ENCODE measurements at regions of chr9 and their contacts with region 1.

Region 1: GRCh38 chr9:88593537-88594185 is 58.7 kb downstream of the NXNL2 start:
- DNase-seq: peak in 1 of 2 donors; percentile 79
- ATAC-seq: peak in 7 of 8 donors; percentile 66 to 82 (median 75)
- H3K4me3 ChIP-seq: no peak overlapping the region
- H3K27ac ChIP-seq: no peak overlapping the region
- H3K4me1 ChIP-seq: no peaks in the 10 kb centered on the region
- H3K27me3 ChIP-seq: peaks cover 0 to 16% (median 0%) of the 10 kb centered on the region in 7 donors
- CTCF ChIP-seq: peak; percentile 45 to 84 (median 70)

Region 2: DNA sequence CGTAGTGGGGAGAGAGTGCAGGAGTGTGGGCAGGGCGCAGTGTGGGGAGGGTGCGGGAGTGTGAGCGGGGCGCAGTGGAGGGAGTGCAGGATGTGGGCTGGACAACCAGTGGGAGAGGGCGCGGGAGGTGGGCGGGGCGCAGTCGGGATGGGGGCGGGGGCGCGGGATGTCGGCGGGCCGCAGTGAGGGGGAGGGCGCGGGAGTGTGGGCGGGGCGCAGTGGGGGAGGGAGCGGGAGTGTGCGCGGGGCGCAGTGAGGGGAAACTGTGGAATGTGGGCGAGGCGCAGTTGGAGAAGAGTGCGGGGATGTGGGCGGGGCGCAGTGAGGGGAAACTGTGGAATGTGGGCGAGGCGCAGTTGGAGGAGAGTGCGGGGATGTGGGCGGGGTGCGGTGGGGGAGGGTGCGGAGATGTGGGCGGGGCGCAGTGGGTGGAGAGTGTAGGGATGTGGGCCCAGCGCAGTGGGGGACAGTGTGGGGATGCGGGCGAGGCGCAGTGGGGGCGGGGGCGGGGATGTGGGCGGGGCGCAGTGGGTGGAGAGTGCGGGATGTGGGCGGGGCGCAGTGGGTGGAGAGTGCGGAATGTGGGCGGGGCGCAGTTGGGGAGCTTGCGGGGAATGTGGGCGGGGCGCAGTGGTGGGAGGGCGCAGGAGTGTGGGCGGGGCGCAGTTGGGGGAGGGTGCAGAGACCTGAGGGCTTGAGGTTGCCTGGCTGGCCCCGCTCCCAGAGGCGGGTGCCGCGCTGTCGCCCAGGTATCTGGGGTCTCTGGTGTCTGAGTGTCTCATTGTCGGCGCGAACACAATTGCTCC is 59.0 kb before region 1 on chr9 and contains the start of gene NXNL2:
- intact Hi-C with region 1: no loop called
- DNase-seq: peak; percentile 59 to 79
- ATAC-seq: peak; percentile 44 to 81 (median 70)
- H3K4me3 ChIP-seq: peak within 1 kb of the TSS; percentile 19 to 50 (median 40)
- H3K27ac ChIP-seq: peak within 1 kb of the TSS in 5 of 10 donors; percentile 22 to 67 (median 48)
- H3K4me1 ChIP-seq: peaks cover 6 to 37% (median 14%) of the 10 kb centered on the region in 9 donors
- H3K27me3 ChIP-seq: peaks cover 5 to 61% (median 36%) of the 10 kb centered on the region in 7 donors
- CTCF ChIP-seq: no peak
- total RNA-seq, gene NXNL2: not detected

Region 3: DNA sequence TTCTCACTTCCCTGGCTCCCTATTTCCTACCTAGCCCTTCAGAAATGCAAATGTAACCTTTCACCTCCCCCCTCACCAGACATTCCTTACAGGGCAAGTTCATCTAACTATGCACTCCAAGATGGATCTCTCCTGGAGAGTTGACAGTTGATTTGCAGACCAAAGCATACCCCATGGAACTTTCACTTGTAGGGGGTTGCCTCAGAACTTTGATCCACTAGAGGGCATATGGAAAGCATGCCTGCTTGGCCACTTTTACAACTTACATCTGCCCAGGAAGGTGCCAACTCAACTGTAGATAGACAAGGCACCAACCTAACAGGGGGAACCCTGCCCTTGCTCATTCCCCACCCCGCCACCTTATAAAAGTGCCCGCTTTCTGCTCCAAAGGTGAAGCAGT is 129.1 kb after region 1 on chr9:
- intact Hi-C with region 1: loop called in 1 of 10 experiments (anchors 10 kb)
- DNase-seq: no peak
- ATAC-seq: peak in 6 of 8 donors; percentile 37 to 75 (median 63)
- H3K4me3 ChIP-seq: no peak overlapping the region
- H3K27ac ChIP-seq: no peak overlapping the region
- H3K4me1 ChIP-seq: peaks cover 0 to 10% (median 6%) of the 10 kb centered on the region in 9 donors
- H3K27me3 ChIP-seq: peaks cover 0 to 7% (median 0%) of the 10 kb centered on the region in 7 donors
- CTCF ChIP-seq: peak in 8 of 9 donors; percentile 14 to 54 (median 46)

Region 4: GRCh38 chr9:88781628-88782391 is 188.1 kb after region 1 on chr9:
- intact Hi-C with region 1: loop called in 1 of 10 experiments (anchors 10 kb)
- DNase-seq: peak; percentile 33 to 48
- ATAC-seq: peak; percentile 40 to 82 (median 72)
- H3K4me3 ChIP-seq: no peak overlapping the region
- H3K27ac ChIP-seq: peak overlapping the region; percentile 15 to 71 (median 54)
- H3K4me1 ChIP-seq: peaks cover 9 to 50% (median 43%) of the 10 kb centered on the region in 9 donors
- H3K27me3 ChIP-seq: no peaks in the 10 kb centered on the region
- CTCF ChIP-seq: peak; percentile 14 to 70 (median 50)

Region 5: DNA sequence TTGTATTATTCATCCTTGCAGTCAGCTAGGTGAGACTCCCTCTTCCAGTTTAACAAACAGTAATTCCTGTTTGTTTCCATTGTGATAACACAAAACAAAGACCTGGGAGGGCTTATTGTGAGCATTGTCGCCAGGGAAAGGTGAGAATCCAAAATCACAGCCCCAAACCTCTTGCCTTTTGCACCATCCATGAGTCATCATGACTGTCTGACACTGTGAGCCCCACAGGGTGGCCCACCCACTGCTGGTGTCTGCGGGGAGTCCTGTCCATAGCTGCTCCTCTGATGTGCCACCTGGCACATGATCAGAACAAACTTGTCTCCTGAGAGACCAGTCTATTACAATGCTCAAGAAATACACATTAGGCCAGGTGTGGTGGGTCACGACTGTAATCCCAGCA is 363.9 kb after region 1 on chr9:
- intact Hi-C with region 1: no loop called
- DNase-seq: no peak
- ATAC-seq: no peak
- H3K4me3 ChIP-seq: no peak overlapping the region
- H3K27ac ChIP-seq: no peak overlapping the region
- H3K4me1 ChIP-seq: peaks cover 0 to 13% (median 5%) of the 10 kb centered on the region in 9 donors
- H3K27me3 ChIP-seq: peaks cover 0 to 15% (median 0%) of the 10 kb centered on the region in 7 donors
- CTCF ChIP-seq: no peak

Region 6: DNA sequence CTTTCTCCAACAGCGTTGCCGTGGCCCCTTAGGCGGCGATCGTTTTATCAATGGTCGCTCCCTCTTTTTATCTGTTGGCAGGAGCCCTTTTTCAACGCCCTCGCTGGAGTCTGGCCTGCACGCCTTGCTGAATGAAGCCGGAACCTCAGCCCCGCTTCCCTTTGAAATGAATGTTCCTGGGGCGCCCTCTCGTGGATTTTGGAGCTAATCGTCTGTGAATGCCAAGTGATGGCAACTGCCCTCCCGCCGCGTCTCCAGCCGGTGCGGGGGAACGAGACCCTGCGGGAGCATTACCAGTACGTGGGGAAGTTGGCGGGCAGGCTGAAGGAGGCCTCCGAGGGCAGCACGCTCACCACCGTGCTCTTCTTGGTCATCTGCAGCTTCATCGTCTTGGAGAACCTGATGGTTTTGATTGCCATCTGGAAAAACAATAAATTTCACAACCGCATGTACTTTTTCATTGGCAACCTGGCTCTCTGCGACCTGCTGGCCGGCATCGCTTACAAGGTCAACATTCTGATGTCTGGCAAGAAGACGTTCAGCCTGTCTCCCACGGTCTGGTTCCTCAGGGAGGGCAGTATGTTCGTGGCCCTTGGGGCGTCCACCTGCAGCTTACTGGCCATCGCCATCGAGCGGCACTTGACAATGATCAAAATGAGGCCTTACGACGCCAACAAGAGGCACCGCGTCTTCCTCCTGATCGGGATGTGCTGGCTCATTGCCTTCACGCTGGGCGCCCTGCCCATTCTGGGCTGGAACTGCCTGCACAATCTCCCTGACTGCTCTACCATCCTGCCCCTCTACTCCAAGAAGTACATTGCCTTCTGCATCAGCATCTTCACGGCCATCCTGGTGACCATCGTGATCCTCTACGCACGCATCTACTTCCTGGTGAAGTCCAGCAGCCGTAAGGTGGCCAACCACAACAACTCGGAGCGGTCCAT is 407.6 kb after region 1 on chr9:
- intact Hi-C with region 1: loop called in 9 of 10 experiments (anchors 1 to 5 kb)
- DNase-seq: peak; percentile 87 to 91
- ATAC-seq: peak; percentile 55 to 86 (median 80)
- H3K4me3 ChIP-seq: peak overlapping the region in 2 of 10 donors; percentile 4 to 19
- H3K27ac ChIP-seq: peak overlapping the region in 7 of 10 donors; percentile 15 to 75 (median 43)
- H3K4me1 ChIP-seq: peaks cover 12 to 46% (median 38%) of the 10 kb centered on the region in 9 donors
- H3K27me3 ChIP-seq: peaks cover 0 to 8% (median 0%) of the 10 kb centered on the region in 7 donors
- CTCF ChIP-seq: peak; percentile 58 to 89 (median 79)

Region 7: GRCh38 chr9:89309608-89310474 is 716.2 kb after region 1 on chr9:
- intact Hi-C with region 1: loop called in 1 of 10 experiments (anchors 10 kb)
- DNase-seq: peak in 1 of 2 donors; percentile 13
- ATAC-seq: no peak
- H3K4me3 ChIP-seq: peak overlapping the region; percentile 69 to 93 (median 80)
- H3K27ac ChIP-seq: peak overlapping the region; percentile 97 to 100 (median 100)
- H3K4me1 ChIP-seq: peaks cover 0 to 44% (median 21%) of the 10 kb centered on the region in 9 donors
- H3K27me3 ChIP-seq: no peaks in the 10 kb centered on the region
- CTCF ChIP-seq: no peak

Region 8: GRCh38 chr9:89874351-89875321 is 1281.0 kb after region 1 on chr9:
- intact Hi-C with region 1: no loop called
- DNase-seq: peak; percentile 44 to 57
- ATAC-seq: peak; percentile 7 to 29 (median 23)
- H3K4me3 ChIP-seq: no peak overlapping the region
- H3K27ac ChIP-seq: peak overlapping the region; percentile 41 to 99 (median 88)
- H3K4me1 ChIP-seq: peaks cover 16 to 74% (median 58%) of the 10 kb centered on the region in 9 donors
- H3K27me3 ChIP-seq: no peaks in the 10 kb centered on the region
- CTCF ChIP-seq: no peak

Measured in heart right ventricle (tissue), 16 donors.